ENCODE measurements at regions of chr2 and their contacts with region 1.

Region 1: DNA sequence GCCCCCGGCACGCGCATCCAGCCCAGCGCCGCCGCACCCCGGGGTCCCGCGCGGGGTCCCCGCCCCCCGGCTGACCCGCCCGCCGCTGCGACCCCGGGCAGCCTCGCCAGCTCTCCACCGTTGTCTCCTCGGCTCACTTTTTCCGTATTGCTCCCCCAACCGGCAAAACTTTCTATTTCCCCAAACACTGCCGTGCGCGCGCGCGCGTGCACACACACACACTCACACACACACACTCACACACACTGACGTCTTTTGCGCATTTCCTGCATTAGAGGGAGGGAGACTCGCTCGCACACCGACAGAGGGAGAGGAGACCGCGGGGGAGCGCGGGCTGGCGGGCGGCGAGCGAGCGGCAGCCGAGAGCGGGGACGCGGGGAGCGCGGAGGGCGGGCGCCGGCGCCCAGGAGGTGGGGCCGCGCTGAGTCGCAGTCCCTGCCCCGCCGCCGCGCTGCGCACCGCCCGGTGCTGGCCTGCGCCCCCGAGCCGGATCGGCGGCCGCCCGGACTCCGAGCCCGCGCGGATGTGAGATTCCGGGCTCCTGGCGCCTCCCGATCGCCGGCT is 542 bp upstream of the PRKCE start:
- DNase-seq: peak; percentile 88 to 95 (median 93)
- ATAC-seq: peak; percentile 76 to 84 (median 79)
- H3K4me3 ChIP-seq: peak overlapping the region; percentile 76 to 94 (median 86)
- H3K27ac ChIP-seq: peak overlapping the region; percentile 92 to 99 (median 98)
- H3K4me1 ChIP-seq: peaks cover 0 to 4% (median 3%) of the 10 kb centered on the region in 3 donors
- H3K27me3 ChIP-seq: no peaks in the 10 kb centered on the region
- CTCF ChIP-seq: peak in 1 of 4 donors; percentile 9

Region 2: DNA sequence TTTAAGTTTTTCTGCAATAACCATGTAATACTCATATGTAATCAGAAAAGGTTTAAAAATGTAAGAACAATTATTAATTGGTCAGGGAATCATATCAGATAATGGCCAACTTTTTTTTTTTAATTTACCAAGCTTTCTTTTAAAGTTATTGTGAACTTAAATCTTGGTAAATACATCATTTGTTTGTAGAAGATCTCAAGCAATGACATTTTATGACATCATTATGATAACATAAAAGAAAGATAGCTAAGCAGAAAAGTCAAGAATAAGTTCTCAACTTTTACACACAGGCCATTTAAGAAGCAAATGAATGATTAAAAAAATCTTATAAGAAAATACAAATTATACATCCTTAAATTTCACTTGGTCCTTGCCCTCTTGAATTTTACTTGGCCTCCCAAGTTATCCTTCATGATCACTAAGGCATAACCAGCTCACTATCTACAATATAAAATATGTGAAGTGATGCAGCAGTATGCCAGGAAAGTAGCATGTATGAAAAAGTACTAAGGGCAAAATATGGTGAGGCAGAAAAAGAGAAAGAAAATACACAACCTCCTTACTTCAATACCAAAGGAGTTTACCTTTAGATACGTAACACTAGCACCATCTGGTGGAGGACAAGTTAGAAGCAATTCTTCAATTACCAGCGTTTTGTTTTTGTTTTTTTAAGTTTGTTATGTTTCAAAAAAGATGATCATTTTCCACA is 156.5 kb before region 1 on chr2:
- intact Hi-C with region 1: no loop called
- DNase-seq: peak in 2 of 6 donors; percentile 14 to 15
- ATAC-seq: peak; percentile 69 to 86 (median 81)
- H3K4me3 ChIP-seq: no peak overlapping the region
- H3K27ac ChIP-seq: no peak overlapping the region
- H3K4me1 ChIP-seq: no peaks in the 10 kb centered on the region
- H3K27me3 ChIP-seq: no peaks in the 10 kb centered on the region
- CTCF ChIP-seq: peak; percentile 49 to 71 (median 56)

Region 3: GRCh38 chr2:45532181-45532580 is 118.8 kb before region 1 on chr2:
- intact Hi-C with region 1: no loop called
- DNase-seq: no peak
- ATAC-seq: no peak
- H3K4me3 ChIP-seq: no peak overlapping the region
- H3K27ac ChIP-seq: no peak overlapping the region
- H3K4me1 ChIP-seq: no peaks in the 10 kb centered on the region
- H3K27me3 ChIP-seq: no peaks in the 10 kb centered on the region
- CTCF ChIP-seq: no peak

Region 4: DNA sequence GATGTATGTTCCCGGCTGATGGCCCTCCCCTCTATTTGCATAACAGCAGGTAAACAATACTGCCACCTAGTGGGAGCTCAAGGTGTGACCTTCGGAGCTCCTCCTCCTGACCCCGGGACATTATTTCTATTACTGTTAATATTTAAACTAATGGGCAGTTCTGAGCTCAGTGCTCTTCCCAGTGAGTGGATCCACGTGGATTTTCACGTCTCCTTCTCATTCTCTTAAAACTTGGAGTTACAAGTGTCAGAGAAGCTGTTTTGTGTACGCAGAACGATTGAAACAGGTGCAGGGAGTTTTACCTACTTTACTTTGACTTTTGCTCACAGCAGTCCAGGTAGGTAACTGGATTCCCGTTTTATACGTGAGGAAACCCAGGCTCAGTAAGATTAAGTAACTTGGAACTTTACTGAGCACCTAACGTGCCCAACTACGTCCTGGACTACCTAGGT is 127.8 kb after region 1 on chr2:
- intact Hi-C with region 1: loop called in 2 of 3 experiments (anchors 5 to 10 kb)
- DNase-seq: peak in 4 of 6 donors; percentile 73 to 84 (median 75)
- ATAC-seq: peak; percentile 89 to 98 (median 94)
- H3K4me3 ChIP-seq: peak overlapping the region in 2 of 4 donors; percentile 12 to 17
- H3K27ac ChIP-seq: peak overlapping the region in 1 of 4 donors; percentile 12
- H3K4me1 ChIP-seq: peaks cover 0 to 6% (median 0%) of the 10 kb centered on the region in 3 donors
- H3K27me3 ChIP-seq: no peaks in the 10 kb centered on the region
- CTCF ChIP-seq: peak; percentile 54 to 75 (median 67)

Region 5: DNA sequence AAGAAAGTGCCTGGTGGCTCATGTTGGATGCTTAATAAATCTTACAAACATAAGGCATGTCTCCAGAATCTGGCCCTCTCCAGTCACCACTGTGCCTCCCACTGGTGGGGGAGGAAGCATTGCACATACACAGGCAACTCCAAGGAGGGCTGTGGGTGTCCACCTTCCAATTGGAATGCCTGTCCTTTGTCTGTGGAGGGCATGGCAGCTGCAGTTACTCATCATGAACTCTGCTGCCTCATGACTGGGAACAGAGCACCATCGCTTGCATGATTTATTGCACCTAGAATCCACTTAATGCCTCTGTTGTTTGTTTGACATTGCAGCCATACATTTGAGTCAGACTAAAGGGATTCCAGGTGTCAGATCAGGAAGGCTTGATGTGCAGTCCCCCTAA is 279.5 kb after region 1 on chr2:
- intact Hi-C with region 1: loop called in 1 of 3 experiments (anchors 5 kb)
- DNase-seq: no peak
- ATAC-seq: no peak
- H3K4me3 ChIP-seq: no peak overlapping the region
- H3K27ac ChIP-seq: peak overlapping the region in 1 of 4 donors; percentile 3
- H3K4me1 ChIP-seq: no peaks in the 10 kb centered on the region
- H3K27me3 ChIP-seq: no peaks in the 10 kb centered on the region
- CTCF ChIP-seq: no peak

Measured in pancreas (tissue), 10 donors.